K562 (cell line): ENCODE measurements at regions of chr2 and their contacts with region 1.

Region 1: DNA sequence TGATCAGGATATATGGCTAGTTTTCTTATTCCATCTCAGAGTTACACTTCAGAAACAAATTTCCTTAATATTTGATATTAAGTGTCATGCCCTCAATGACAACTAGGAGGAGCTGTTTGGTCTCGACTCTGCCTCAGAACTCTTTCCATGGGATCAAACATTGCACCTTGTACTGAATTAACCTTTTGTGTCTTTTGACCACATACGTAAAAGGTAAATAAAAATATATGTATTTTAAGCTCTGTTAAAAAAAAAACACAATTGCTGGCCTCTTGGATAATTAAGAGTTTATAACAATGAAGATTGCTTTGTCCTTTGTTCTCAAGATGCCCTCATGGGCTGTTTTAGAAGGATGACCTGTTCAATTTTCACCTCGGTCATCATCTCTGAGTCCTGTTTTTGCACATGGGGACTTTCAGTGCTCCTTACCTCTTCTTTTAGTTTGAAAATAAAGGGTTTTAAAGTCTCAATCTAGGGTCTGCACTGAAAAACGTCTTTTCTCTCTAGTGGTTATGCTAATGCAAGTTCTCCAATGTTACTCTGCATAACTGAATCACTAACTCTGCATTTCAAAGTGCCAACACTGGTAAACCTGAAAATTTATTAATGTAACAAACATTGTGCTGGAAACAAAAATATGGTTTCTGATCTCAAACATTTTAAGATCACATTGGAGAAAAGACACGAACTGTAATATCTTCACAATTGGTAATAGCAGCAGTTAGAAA is 18.8 kb upstream of the FN1 start:
- DNase-seq: peak; percentile 32 to 45 (median 44)
- ATAC-seq: peak; percentile 67
- H3K4me3 ChIP-seq: no peak overlapping the region
- H3K27ac ChIP-seq: no peak overlapping the region
- H3K4me1 ChIP-seq: no peaks in the 10 kb centered on the region
- H3K27me3 ChIP-seq: no peaks in the 10 kb centered on the region
- CTCF ChIP-seq: peak; percentile 45 to 72 (median 64); a peak in 5 of 6 replicates
- EP300 ChIP-seq: no peak
- POLR2A ChIP-seq: no peak
- RAD21 ChIP-seq: peak; percentile 74 to 79

Region 2: GRCh38 chr2:215624423-215624829 is 169.7 kb after region 1 on chr2:
- CTCF ChIA-PET with region 1: no interaction called
- POLR2A ChIA-PET with region 1: no interaction called
- in situ Hi-C with region 1: no loop called
- intact Hi-C with region 1: loop called (anchors 5 kb)
- DNase-seq: no peak
- ATAC-seq: no peak
- H3K4me3 ChIP-seq: no peak overlapping the region
- H3K27ac ChIP-seq: no peak overlapping the region
- H3K4me1 ChIP-seq: peaks cover 3 to 12% of the 10 kb centered on the region in 2 experiments; a peak in 4 of 5 replicates
- H3K27me3 ChIP-seq: no peaks in the 10 kb centered on the region
- CTCF ChIP-seq: no peak
- EP300 ChIP-seq: no peak
- POLR2A ChIP-seq: no peak
- RAD21 ChIP-seq: no peak

Region 3: GRCh38 chr2:215711471-215712034 is 256.9 kb after region 1 on chr2:
- CTCF ChIA-PET with region 1: no interaction called
- POLR2A ChIA-PET with region 1: no interaction called
- in situ Hi-C with region 1: no loop called
- intact Hi-C with region 1: loop called (anchors 10 kb)
- DNase-seq: no peak
- ATAC-seq: no peak
- H3K4me3 ChIP-seq: no peak overlapping the region
- H3K27ac ChIP-seq: no peak overlapping the region
- H3K4me1 ChIP-seq: peaks cover 0 to 5% of the 10 kb centered on the region in 2 experiments; a peak in 1 of 5 replicates
- H3K27me3 ChIP-seq: no peaks in the 10 kb centered on the region
- CTCF ChIP-seq: no peak
- EP300 ChIP-seq: no peak
- POLR2A ChIP-seq: no peak
- RAD21 ChIP-seq: no peak